ENCODE measurements at regions of chr11 and their contacts with region 1.

Region 1: DNA sequence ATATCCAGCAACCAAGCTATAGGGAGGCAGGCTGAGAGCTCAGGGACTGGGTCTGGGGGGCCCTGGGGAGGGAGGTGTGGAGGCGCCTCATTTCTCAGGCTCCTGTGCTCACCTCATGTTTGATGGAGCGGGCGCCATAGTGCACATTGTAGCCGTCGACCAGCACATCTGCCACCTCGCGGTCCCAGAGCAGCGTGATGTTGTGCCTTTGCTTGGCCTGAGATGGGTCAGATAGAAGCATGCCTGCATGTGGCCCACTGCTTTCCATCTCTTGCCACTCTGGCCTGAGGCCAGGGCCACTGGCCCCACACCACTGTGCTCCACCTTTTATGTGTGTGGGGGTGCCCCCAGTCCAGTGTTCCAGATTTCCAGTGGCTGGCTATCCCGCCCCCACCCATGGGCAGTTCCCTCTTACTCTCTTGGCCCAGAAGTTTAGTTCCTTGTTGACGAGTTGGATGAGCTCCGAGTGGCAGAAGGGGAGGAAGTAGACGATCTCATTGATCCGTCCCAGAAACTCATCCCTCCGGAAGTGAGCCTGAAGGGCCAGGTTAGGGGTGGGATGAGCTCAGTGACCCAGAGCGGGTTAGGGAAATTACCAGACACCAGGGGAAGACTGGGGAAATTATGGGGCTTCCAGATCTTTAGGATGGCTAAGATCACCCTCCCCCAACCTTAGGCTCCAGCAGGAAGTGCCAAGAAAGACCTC is 50.1 kb upstream of the PHOX2A start:
- DNase-seq: no peak
- H3K4me3 ChIP-seq: no peak overlapping the region
- H3K27ac ChIP-seq: no peak overlapping the region
- H3K4me1 ChIP-seq: no peaks in the 10 kb centered on the region
- H3K27me3 ChIP-seq: no peaks in the 10 kb centered on the region
- CTCF ChIP-seq: no peak

Region 2: DNA sequence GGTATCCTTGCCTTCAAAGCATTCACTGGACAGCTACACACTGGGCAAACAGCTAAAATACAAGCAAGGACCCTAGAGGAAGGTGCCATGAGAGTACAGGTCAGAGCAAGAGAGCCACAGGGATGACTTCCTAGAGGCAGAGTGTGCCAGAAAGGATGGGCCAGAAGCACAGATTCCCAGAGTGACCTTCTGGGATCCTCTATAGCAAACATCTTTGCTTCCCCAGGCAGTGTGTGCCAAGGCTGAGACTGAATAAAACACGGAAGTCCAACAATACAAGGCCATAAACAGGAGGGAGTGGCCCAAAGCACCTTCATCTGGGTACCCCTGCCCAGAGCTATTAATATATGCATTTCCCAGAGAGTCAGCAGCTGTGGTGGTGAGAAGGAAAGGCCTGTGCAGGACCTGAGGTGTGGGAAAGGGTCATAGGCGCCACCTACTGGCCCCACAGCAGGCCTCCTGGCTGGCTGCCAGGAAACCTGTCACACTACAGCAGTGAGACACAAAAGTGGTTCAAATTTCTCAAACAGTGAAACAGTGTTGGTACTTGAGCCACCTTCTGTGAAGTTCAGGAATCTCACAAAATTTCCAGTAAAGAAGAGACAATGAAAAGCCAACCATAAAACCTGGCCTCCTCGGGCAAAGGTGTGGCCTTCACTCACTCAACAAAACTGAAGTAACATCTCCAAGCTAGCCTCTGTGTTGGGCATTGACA is 120.0 kb after region 1 on chr11:
- intact Hi-C with region 1: loop called (anchors 2 kb)
- DNase-seq: peak; percentile 61 to 92
- H3K4me3 ChIP-seq: no peak overlapping the region
- H3K27ac ChIP-seq: no peak overlapping the region
- H3K4me1 ChIP-seq: peaks cover 0 to 2% of the 10 kb centered on the region in 2 donors
- H3K27me3 ChIP-seq: no peaks in the 10 kb centered on the region
- CTCF ChIP-seq: peak; percentile 79 to 82 (median 82)

Measured in ascending aorta (tissue), 2 donors.